ENCODE measurements at regions of chr5 and their contacts with region 1.

Region 1: GRCh38 chr5:59126708-59127573 is 544.1 kb downstream of the RAB3C start:
- DNase-seq: peak in 3 of 9 experiments; percentile 7 to 73 (median 59)
- ATAC-seq: no peak
- H3K4me3 ChIP-seq: peak overlapping the region; percentile 37 to 49
- H3K4me3 Mint-ChIP-seq: no peak overlapping the region
- H3K27ac ChIP-seq: peak overlapping the region; percentile 19 to 82
- H3K27ac Mint-ChIP-seq: no peak overlapping the region
- H3K4me1 ChIP-seq: peaks cover 67% of the 10 kb centered on the region
- H3K4me1 Mint-ChIP-seq: peaks cover 14% of the 10 kb centered on the region
- H3K27me3 ChIP-seq: no peaks in the 10 kb centered on the region
- H3K27me3 Mint-ChIP-seq: no peaks in the 10 kb centered on the region
- CTCF ChIP-seq: no peak

Region 2: GRCh38 chr5:59099270-59099994 is 27.5 kb before region 1 on chr5:
- CTCF ChIA-PET with region 1: interaction called, 5 read pairs
- POLR2A ChIA-PET with region 1: interaction called, 7 read pairs
- intact Hi-C with region 1: loop called (anchors 1 to 2 kb)
- DNase-seq: peak in 7 of 9 experiments; percentile 18 to 92 (median 45)
- ATAC-seq: peak; percentile 93
- H3K4me3 ChIP-seq: no peak overlapping the region
- H3K4me3 Mint-ChIP-seq: no peak overlapping the region
- H3K27ac ChIP-seq: peak overlapping the region in 1 of 2 experiments; percentile 79
- H3K27ac Mint-ChIP-seq: peak overlapping the region; percentile 60
- H3K4me1 ChIP-seq: peaks cover 12% of the 10 kb centered on the region
- H3K4me1 Mint-ChIP-seq: peaks cover 29% of the 10 kb centered on the region
- H3K27me3 ChIP-seq: no peaks in the 10 kb centered on the region
- H3K27me3 Mint-ChIP-seq: no peaks in the 10 kb centered on the region
- CTCF ChIP-seq: no peak

Region 3: GRCh38 chr5:59104400-59105127 is 22.4 kb before region 1 on chr5:
- CTCF ChIA-PET with region 1: interaction called, 4 read pairs
- POLR2A ChIA-PET with region 1: interaction called, 5 read pairs
- intact Hi-C with region 1: loop called (anchors 1 to 2 kb)
- DNase-seq: peak in 1 of 9 experiments; percentile 22
- ATAC-seq: no peak
- H3K4me3 ChIP-seq: no peak overlapping the region
- H3K4me3 Mint-ChIP-seq: no peak overlapping the region
- H3K27ac ChIP-seq: no peak overlapping the region
- H3K27ac Mint-ChIP-seq: no peak overlapping the region
- H3K4me1 ChIP-seq: peaks cover 15% of the 10 kb centered on the region
- H3K4me1 Mint-ChIP-seq: peaks cover 23% of the 10 kb centered on the region
- H3K27me3 ChIP-seq: no peaks in the 10 kb centered on the region
- H3K27me3 Mint-ChIP-seq: no peaks in the 10 kb centered on the region
- CTCF ChIP-seq: no peak

Region 4: GRCh38 chr5:59143926-59144333 is 17.0 kb after region 1 on chr5:
- CTCF ChIA-PET with region 1: interaction called, 5 read pairs
- POLR2A ChIA-PET with region 1: interaction called, 3 read pairs
- intact Hi-C with region 1: loop called (anchors 2 kb)
- DNase-seq: no peak
- ATAC-seq: no peak
- H3K4me3 ChIP-seq: no peak overlapping the region
- H3K4me3 Mint-ChIP-seq: no peak overlapping the region
- H3K27ac ChIP-seq: no peak overlapping the region
- H3K27ac Mint-ChIP-seq: no peak overlapping the region
- H3K4me1 ChIP-seq: no peaks in the 10 kb centered on the region
- H3K4me1 Mint-ChIP-seq: peaks cover 4% of the 10 kb centered on the region
- H3K27me3 ChIP-seq: no peaks in the 10 kb centered on the region
- H3K27me3 Mint-ChIP-seq: no peaks in the 10 kb centered on the region
- CTCF ChIP-seq: no peak

Region 5: GRCh38 chr5:59161221-59162105 is 34.5 kb after region 1 on chr5:
- CTCF ChIA-PET with region 1: no interaction called
- POLR2A ChIA-PET with region 1: interaction called, 11 read pairs
- intact Hi-C with region 1: no loop called
- DNase-seq: peak in 2 of 9 experiments; percentile 8 to 56
- ATAC-seq: peak; percentile 66
- H3K4me3 ChIP-seq: no peak overlapping the region
- H3K4me3 Mint-ChIP-seq: no peak overlapping the region
- H3K27ac ChIP-seq: no peak overlapping the region
- H3K27ac Mint-ChIP-seq: peak overlapping the region; percentile 16
- H3K4me1 ChIP-seq: peaks cover 8% of the 10 kb centered on the region
- H3K4me1 Mint-ChIP-seq: peaks cover 12% of the 10 kb centered on the region
- H3K27me3 ChIP-seq: no peaks in the 10 kb centered on the region
- H3K27me3 Mint-ChIP-seq: no peaks in the 10 kb centered on the region
- CTCF ChIP-seq: no peak